Activated CD4-positive, alpha-beta T cell treated with anti-CD3 and anti-CD28 coated beads for 36 hours (primary cell): ENCODE measurements at regions of chr1 and their contacts with region 1.

Region 1: DNA sequence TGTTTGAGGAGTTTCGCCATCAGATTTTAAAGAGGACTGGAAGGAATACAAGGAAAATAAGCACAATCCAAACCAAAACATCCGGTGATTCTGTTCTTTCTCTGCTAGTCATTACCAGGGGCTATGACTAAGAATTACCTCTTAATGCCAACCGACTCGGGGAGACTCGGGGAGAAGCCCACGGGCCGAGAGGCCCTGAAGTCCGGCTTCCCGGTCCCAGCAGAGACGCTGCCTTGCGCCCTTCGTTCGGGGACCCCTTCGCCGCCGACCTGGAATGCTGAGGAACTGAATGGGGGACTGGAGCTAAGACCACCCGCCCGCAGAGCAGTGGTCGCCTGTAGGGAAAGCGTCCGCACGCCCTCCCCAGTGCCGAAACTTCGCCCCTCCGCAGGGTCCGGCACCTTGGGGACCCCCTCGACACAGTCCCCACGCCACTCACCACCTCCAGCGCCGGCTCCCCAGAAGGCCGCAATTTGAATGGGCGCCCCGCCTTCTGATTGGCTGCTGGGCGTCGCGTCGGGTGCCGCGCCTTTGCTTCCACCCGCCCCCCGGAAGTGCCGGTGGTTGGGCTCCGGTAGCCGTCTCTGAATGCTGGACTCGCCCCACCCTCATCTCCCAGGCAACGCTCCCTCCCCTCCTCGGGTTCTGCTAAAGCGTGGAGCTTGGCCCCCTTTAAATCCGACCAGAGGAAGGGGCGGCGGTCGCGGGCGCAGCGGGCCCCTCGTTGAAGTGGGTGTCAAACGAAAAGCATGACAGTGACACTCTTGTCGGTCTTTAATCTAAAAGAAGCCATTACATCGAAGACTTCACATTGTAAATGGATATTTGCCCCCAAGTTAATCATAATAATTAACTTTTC is at the start of gene KIF14:
- DNase-seq: peak; percentile 96
- ATAC-seq: peak; percentile 93
- H3K4me3 Mint-ChIP-seq: peak within 1 kb of the TSS; percentile 84
- H3K27ac Mint-ChIP-seq: peak within 1 kb of the TSS; percentile 88
- H3K4me1 Mint-ChIP-seq: peaks cover 24% of the 10 kb centered on the region
- H3K27me3 Mint-ChIP-seq: no peaks in the 10 kb centered on the region
- total RNA-seq, gene KIF14: 14.8 to 14.9 TPM

Region 2: DNA sequence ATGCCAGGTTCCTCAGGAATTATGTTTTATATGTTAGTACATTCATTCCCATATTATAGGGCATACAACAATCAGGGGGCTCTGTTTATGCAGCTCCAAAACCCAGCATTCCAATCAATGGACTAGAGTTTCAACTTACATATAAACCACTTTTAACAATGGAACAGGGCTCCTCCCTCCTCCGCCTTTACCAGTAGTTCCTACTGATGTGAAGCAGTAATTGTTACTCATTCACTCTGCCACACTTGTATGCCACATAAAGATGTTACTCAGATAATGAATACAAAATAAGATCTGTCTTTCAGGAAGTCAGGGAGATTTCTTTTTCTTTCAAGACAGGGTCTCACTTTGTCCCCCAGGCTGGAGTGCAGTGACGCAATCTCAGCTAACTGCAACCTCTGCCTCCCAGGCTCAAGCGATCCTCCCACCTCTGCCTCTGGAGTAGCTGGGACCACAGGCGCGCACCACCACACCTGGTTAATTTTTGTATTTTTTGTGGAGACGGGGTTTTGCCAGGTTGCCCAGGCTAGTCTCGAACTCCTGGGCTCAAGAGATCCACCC is 227.8 kb before region 1 on chr1:
- CTCF ChIA-PET with region 1: no interaction called
- POLR2A ChIA-PET with region 1: no interaction called
- intact Hi-C with region 1: no loop called
- DNase-seq: no peak
- ATAC-seq: no peak
- H3K4me3 Mint-ChIP-seq: no peak overlapping the region
- H3K27ac Mint-ChIP-seq: no peak overlapping the region
- H3K4me1 Mint-ChIP-seq: peaks cover 3% of the 10 kb centered on the region
- H3K27me3 Mint-ChIP-seq: no peaks in the 10 kb centered on the region

Region 3: GRCh38 chr1:200558866-200559459 is 61.5 kb before region 1 on chr1:
- CTCF ChIA-PET with region 1: interaction called, 7 read pairs
- POLR2A ChIA-PET with region 1: interaction called, 5 read pairs
- intact Hi-C with region 1: loop called (anchors 2 to 5 kb)
- DNase-seq: peak; percentile 24
- ATAC-seq: peak; percentile 60
- H3K4me3 Mint-ChIP-seq: no peak overlapping the region
- H3K27ac Mint-ChIP-seq: no peak overlapping the region
- H3K4me1 Mint-ChIP-seq: peaks cover 10% of the 10 kb centered on the region
- H3K27me3 Mint-ChIP-seq: no peaks in the 10 kb centered on the region

Region 4: DNA sequence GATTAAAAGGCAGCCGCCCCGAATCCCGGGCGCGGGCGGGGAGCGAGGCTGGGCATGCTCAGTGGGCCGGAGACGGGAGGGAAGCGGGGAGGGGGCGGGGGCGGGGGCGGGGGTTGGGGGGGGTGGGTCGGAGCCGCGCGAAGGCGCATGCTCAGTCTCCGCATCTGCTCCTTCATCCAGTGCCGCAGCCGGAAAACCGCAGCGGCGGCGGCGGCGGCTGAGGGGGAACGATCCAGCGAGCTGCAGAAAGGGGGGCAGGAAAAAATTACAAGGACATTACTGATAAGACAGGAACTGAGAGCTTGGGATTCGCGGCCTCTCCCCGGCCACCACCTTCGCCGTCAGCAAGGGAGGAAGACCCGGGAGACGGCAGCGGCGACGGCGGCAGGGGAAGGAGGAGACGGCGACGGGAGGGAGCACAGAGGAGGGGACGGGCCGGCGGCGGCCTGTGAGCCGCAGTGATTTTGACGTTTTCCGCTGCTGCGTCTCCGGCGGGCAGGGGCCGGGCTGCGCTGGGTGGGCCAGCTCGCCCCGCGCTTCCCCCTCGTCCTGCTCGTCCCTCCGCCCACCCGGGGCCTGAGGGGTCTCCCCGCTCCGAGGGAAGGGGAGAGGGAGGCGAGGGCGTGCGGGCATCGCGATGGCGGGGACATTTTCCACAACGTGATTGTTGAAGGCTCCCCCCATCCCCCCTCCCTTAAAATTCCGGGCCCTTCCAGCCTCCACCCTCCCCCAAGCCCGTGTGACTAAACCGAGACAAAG is 118.4 kb after region 1 on chr1 and contains the start of gene CAMSAP2:
- CTCF ChIA-PET with region 1: interaction called, 10 read pairs
- POLR2A ChIA-PET with region 1: no interaction called
- intact Hi-C with region 1: loop called (anchors 2 kb)
- DNase-seq: peak; percentile 74
- ATAC-seq: peak; percentile 51
- H3K4me3 Mint-ChIP-seq: peak within 1 kb of the TSS; percentile 91
- H3K27ac Mint-ChIP-seq: peak within 1 kb of the TSS; percentile 90
- H3K4me1 Mint-ChIP-seq: peaks cover 44% of the 10 kb centered on the region
- H3K27me3 Mint-ChIP-seq: peaks cover 4% of the 10 kb centered on the region
- total RNA-seq, gene CAMSAP2: 2.3 to 3.0 TPM

Region 5: GRCh38 chr1:200802865-200803512 is 182.5 kb after region 1 on chr1:
- CTCF ChIA-PET with region 1: interaction called, 90 read pairs
- POLR2A ChIA-PET with region 1: no interaction called
- intact Hi-C with region 1: loop called (anchors 1 kb)
- DNase-seq: peak; percentile 86
- ATAC-seq: peak; percentile 88
- H3K4me3 Mint-ChIP-seq: no peak overlapping the region
- H3K27ac Mint-ChIP-seq: no peak overlapping the region
- H3K4me1 Mint-ChIP-seq: peaks cover 2% of the 10 kb centered on the region
- H3K27me3 Mint-ChIP-seq: no peaks in the 10 kb centered on the region

Region 6: GRCh38 chr1:201042779-201043461 is 422.4 kb after region 1 on chr1:
- CTCF ChIA-PET with region 1: interaction called, 4 read pairs
- POLR2A ChIA-PET with region 1: no interaction called
- intact Hi-C with region 1: loop called (anchors 5 kb)
- DNase-seq: peak; percentile 85
- ATAC-seq: peak; percentile 96
- H3K4me3 Mint-ChIP-seq: no peak overlapping the region
- H3K27ac Mint-ChIP-seq: no peak overlapping the region
- H3K4me1 Mint-ChIP-seq: no peaks in the 10 kb centered on the region
- H3K27me3 Mint-ChIP-seq: no peaks in the 10 kb centered on the region

Region 7: DNA sequence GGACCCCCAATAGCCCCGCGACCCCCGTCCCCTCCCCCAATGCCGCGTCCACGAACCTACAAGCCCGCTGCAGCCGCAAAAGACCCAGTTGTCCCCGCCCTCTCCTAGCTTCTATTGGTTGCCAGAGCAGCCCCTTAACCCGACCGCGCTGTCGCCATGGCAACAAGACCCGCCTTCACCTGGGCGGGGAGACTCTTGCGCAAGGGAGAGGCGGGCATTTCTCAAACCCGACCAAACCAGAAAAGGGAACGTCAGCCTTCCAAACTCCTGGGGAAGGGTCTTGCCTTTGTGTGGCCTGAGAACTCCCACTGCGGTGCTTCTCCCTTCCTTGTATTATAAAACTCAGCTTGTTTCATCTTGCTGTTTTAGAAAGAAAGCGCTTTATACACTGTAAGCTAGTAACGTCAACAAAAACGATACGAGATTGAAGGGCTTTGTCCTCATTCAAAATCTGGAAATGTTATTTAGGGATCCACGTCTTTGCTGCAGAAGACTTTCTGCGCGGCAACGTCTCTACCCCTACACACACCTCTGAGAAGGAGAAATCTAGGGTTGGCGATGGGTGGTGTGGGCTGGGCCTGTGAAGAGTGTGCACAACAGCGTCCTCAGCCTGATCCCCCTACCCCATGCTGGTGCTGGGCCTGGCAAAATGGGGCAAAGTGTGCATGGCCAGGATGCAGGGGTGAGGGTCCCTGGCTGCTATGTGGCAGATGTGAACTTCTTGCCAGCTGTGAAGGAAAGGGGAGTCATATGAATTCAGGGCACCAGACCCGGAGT is 534.1 kb after region 1 on chr1 and contains the start of gene TMEM9:
- CTCF ChIA-PET with region 1: no interaction called
- POLR2A ChIA-PET with region 1: interaction called, 6 read pairs
- intact Hi-C with region 1: loop called in 1 of 2 experiments (anchors 1 kb)
- DNase-seq: peak; percentile 99
- ATAC-seq: peak; percentile 96
- H3K4me3 Mint-ChIP-seq: peak within 1 kb of the TSS; percentile 78
- H3K27ac Mint-ChIP-seq: peak within 1 kb of the TSS; percentile 85
- H3K4me1 Mint-ChIP-seq: peaks cover 18% of the 10 kb centered on the region
- H3K27me3 Mint-ChIP-seq: peaks cover 4% of the 10 kb centered on the region
- total RNA-seq, gene TMEM9: 15.7 to 27.2 TPM